ENCODE measurements at regions of chr12 and their contacts with region 1.

Region 1: GRCh38 chr12:14769969-14770495 is 33.2 kb downstream of the WBP11 start:
- DNase-seq: peak; percentile 87 to 92 (median 91)
- H3K4me3 ChIP-seq: peak overlapping the region; percentile 54 to 97 (median 85)
- H3K27ac ChIP-seq: peak overlapping the region; percentile 61 to 83
- H3K4me1 ChIP-seq: peaks cover 11 to 48% (median 33%) of the 10 kb centered on the region in 4 experiments
- H3K27me3 ChIP-seq: no peaks in the 10 kb centered on the region

Region 2: DNA sequence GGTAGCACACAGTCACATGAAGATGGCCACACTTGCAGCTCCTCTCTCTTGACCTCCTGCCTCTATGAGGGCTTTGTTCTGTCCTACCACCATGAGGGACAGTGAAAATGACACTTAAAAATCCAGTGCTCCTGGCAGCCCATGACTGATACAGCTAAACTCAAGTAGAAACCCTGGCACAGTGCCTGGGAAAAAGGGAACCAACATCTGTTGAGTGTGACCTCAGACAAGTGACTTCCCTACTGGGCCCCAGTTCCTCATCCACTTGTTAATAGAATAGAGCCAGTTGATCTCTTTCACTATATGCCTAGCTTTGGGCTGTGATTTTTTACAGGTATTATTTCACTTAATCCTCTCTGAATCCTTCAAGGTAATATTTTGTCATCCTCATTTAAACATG is 78.5 kb before region 1 on chr12:
- CTCF ChIA-PET with region 1: no interaction called
- POLR2A ChIA-PET with region 1: no interaction called
- DNase-seq: peak; percentile 88 to 95 (median 94)
- H3K4me3 ChIP-seq: no peak overlapping the region
- H3K27ac ChIP-seq: no peak overlapping the region
- H3K4me1 ChIP-seq: peaks cover 0 to 8% (median 3%) of the 10 kb centered on the region in 4 experiments
- H3K27me3 ChIP-seq: no peaks in the 10 kb centered on the region

Region 3: DNA sequence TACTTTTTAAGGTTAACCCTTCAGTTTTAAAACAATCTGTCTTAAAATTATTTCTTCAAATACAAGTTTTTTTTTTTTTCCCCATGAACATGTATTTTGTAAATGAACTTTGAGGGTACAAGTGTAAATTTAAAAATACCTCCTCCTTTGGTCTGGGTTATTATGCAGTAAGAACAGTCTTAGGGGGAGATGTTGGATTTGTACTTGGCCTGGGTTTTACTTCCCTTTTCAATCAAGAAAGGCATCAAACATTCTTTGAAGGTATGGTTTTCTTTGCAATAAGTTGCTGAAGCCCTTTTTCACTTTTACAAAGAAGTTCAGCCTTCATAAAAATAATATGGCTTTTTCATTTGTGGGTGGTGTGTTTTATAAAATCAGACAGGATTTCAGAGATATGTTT is 12.7 kb after region 1 on chr12:
- CTCF ChIA-PET with region 1: interaction called, 11 read pairs
- POLR2A ChIA-PET with region 1: interaction called, 4 read pairs
- DNase-seq: peak in 1 of 3 donors; percentile 9
- H3K4me3 ChIP-seq: no peak overlapping the region
- H3K27ac ChIP-seq: no peak overlapping the region
- H3K4me1 ChIP-seq: peaks cover 0 to 5% (median 0%) of the 10 kb centered on the region in 4 experiments
- H3K27me3 ChIP-seq: no peaks in the 10 kb centered on the region

Region 4: GRCh38 chr12:14803011-14803829 is 33.2 kb after region 1 on chr12 and contains the starts of genes C12orf60 and WBP11:
- CTCF ChIA-PET with region 1: interaction called, 64 read pairs
- POLR2A ChIA-PET with region 1: no interaction called
- DNase-seq: peak; percentile 99
- H3K4me3 ChIP-seq: peak within 1 kb of the TSS; percentile 86 to 99 (median 95)
- H3K27ac ChIP-seq: peak within 1 kb of the TSS; percentile 91 to 97
- H3K4me1 ChIP-seq: peaks cover 2 to 23% (median 12%) of the 10 kb centered on the region in 4 experiments
- H3K27me3 ChIP-seq: no peaks in the 10 kb centered on the region

Region 5: GRCh38 chr12:14814014-14814413 is 44.0 kb after region 1 on chr12 and contains the start of gene SMCO3:
- CTCF ChIA-PET with region 1: no interaction called
- POLR2A ChIA-PET with region 1: no interaction called
- DNase-seq: no peak
- H3K4me3 ChIP-seq: no peak within 1 kb of the TSS
- H3K27ac ChIP-seq: no peak within 1 kb of the TSS
- H3K4me1 ChIP-seq: peaks cover 0 to 2% (median 0%) of the 10 kb centered on the region in 4 experiments
- H3K27me3 ChIP-seq: no peaks in the 10 kb centered on the region